A549 (cell line): ENCODE measurements at regions of chr11 and their contacts with region 1.

Region 1: GRCh38 chr11:117143871-117144476 is at the start of gene PAFAH1B2:
- DNase-seq: peak; percentile 92 to 93
- ATAC-seq: peak; percentile 97 to 98
- H3K4me3 ChIP-seq: peak within 1 kb of the TSS; percentile 97
- H3K27ac ChIP-seq: peak within 1 kb of the TSS; percentile 88 to 100
- H3K4me1 ChIP-seq: peaks cover 23% of the 10 kb centered on the region; the same call in 2 of the 3 replicates
- CTCF ChIP-seq: no peak
- EP300 ChIP-seq: no peak
- POLR2A ChIP-seq: peak; percentile 97
- RAD21 ChIP-seq: no peak
- polyA plus RNA-seq, gene PAFAH1B2: 47.8 and 55.3 TPM in 2 replicates

Region 2: GRCh38 chr11:117058761-117059261 is 85.2 kb before region 1 on chr11:
- CTCF ChIA-PET with region 1: no interaction called
- POLR2A ChIA-PET with region 1: no interaction called
- DNase-seq: no peak
- ATAC-seq: no peak
- H3K4me3 ChIP-seq: no peak overlapping the region
- H3K27ac ChIP-seq: no peak overlapping the region
- H3K4me1 ChIP-seq: peaks cover 20% of the 10 kb centered on the region; the same call in 2 of the 3 replicates
- CTCF ChIP-seq: no peak
- EP300 ChIP-seq: no peak
- POLR2A ChIP-seq: no peak
- RAD21 ChIP-seq: no peak

Region 3: DNA sequence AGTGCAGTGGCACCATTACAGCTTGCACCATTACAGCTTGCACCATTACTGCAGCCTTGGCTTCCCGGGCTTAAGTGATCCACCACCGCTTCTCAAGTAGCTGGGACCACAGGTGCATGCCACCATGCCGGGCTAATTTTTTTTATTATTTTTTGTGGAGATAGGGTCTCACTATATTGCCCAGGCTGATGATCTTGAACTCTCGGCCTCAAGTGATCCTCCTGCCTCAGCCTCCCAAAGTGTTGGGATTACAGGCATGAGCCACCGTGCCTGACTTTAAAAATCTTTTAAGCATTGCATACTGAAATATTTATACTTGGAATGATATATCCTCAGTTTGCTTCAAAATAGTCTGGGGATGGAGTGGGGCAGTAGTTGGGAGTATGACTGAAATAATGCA is 10.5 kb after region 1 on chr11:
- CTCF ChIA-PET with region 1: interaction called, 10 read pairs
- POLR2A ChIA-PET with region 1: no interaction called
- DNase-seq: no peak
- ATAC-seq: no peak
- H3K4me3 ChIP-seq: no peak overlapping the region
- H3K27ac ChIP-seq: no peak overlapping the region
- H3K4me1 ChIP-seq: no peaks in the 10 kb centered on the region; the same call in 2 of the 3 replicates
- CTCF ChIP-seq: no peak
- EP300 ChIP-seq: no peak
- POLR2A ChIP-seq: no peak
- RAD21 ChIP-seq: no peak

Region 4: GRCh38 chr11:117178210-117179034 is 34.4 kb after region 1 on chr11 and contains the start of gene SIDT2:
- CTCF ChIA-PET with region 1: interaction called, 4 read pairs
- POLR2A ChIA-PET with region 1: interaction called, 22 read pairs
- DNase-seq: peak; percentile 76 to 83
- ATAC-seq: peak; percentile 84 to 94
- H3K4me3 ChIP-seq: peak within 1 kb of the TSS; percentile 91
- H3K27ac ChIP-seq: peak within 1 kb of the TSS; percentile 86 to 95
- H3K4me1 ChIP-seq: peaks cover 13% of the 10 kb centered on the region
- CTCF ChIP-seq: no peak
- EP300 ChIP-seq: no peak
- POLR2A ChIP-seq: peak; percentile 35; the same call in 1 of the 2 replicates
- RAD21 ChIP-seq: no peak; a peak in 1 of 5 replicates
- polyA plus RNA-seq, gene SIDT2: 8.5 and 15.4 TPM in 2 replicates